Activated T-helper 1 cell treated with anti-CD3 and anti-CD28 coated beads, Interleukin-12 subunit alpha, Interleukin-12 subunit beta, Interleukin-2, Interleukin-4 antibody, amounts not matched to agents 30 ng/mL and 10 ng/mL and 1 ng/mL, durations not matched to agents 14 hours and 24 hours and 36 hours (primary cell): ENCODE measurements at regions of chr20 and their contacts with region 1.

Region 1: GRCh38 chr20:31849455-31849925 is 4.1 kb upstream of the FOXS1 start:
- DNase-seq: no peak
- H3K4me3 Mint-ChIP-seq: no peak overlapping the region
- H3K27ac Mint-ChIP-seq: no peak overlapping the region
- H3K4me1 Mint-ChIP-seq: no peaks in the 10 kb centered on the region
- H3K27me3 Mint-ChIP-seq: peaks cover 20% of the 10 kb centered on the region

Region 2: GRCh38 chr20:31496761-31497295 is 352.7 kb before region 1 on chr20:
- intact Hi-C with region 1: no loop called
- DNase-seq: no peak
- H3K4me3 Mint-ChIP-seq: no peak overlapping the region
- H3K27ac Mint-ChIP-seq: no peak overlapping the region
- H3K4me1 Mint-ChIP-seq: no peaks in the 10 kb centered on the region
- H3K27me3 Mint-ChIP-seq: peaks cover 9% of the 10 kb centered on the region

Region 3: DNA sequence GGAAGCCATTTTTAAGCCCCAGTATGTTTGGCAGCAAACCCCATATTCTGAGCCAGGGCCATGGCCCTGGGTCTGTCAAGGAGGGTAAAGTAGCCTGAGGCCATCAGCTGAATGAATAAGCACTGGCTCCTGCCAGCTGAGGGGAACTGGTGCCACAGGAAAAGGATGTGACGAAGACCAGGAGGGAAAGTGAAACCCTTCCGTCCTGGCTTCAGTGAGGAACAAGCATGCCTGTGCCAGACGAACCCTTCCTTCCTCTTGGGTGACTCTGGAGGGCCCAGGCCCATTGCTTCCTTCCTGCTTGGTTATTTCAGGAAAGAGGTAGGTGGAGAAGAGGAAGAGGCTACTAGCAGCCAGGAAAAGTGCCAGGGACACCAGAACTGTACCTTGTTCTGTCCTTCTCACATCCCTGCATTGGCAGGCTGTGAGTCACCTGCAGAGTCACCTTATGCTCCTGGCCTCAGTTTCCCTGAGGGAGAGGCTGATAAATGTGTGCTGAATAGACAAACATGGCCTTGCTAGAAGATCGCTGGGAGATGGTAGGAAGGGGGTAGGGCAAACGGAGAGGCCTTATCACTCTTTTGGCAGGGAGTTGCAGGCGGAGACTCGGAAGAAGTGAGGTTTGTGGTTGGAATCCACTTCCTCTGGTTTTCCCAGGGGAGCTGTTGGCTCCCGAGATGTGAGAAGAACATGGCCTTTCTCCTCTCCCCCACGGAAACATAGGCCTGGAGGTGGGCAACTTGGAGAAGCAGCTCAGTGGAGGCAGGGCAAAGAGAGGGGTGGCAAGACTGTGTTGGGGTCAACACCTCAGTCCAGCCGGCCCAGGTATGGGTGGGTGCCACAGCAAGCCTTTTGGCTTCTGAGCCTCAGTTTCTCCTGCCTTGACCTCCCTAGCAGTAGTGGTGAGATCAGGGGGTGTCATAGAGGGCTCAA is 174.3 kb before region 1 on chr20:
- intact Hi-C with region 1: no loop called
- DNase-seq: peak; percentile 71
- H3K4me3 Mint-ChIP-seq: peak overlapping the region; percentile 86
- H3K27ac Mint-ChIP-seq: peak overlapping the region; percentile 90
- H3K4me1 Mint-ChIP-seq: peaks cover 89% of the 10 kb centered on the region
- H3K27me3 Mint-ChIP-seq: no peaks in the 10 kb centered on the region

Region 4: GRCh38 chr20:31822421-31823330 is 26.8 kb before region 1 on chr20:
- intact Hi-C with region 1: loop called (anchors 1 kb)
- DNase-seq: peak; percentile 58
- H3K4me3 Mint-ChIP-seq: no peak overlapping the region
- H3K27ac Mint-ChIP-seq: no peak overlapping the region
- H3K4me1 Mint-ChIP-seq: no peaks in the 10 kb centered on the region
- H3K27me3 Mint-ChIP-seq: peaks cover 1% of the 10 kb centered on the region

Region 5: GRCh38 chr20:31879143-31879987 is 29.9 kb after region 1 on chr20:
- intact Hi-C with region 1: loop called (anchors 2 kb)
- DNase-seq: peak; percentile 78
- H3K4me3 Mint-ChIP-seq: peak overlapping the region; percentile 92
- H3K27ac Mint-ChIP-seq: peak overlapping the region; percentile 77
- H3K4me1 Mint-ChIP-seq: peaks cover 24% of the 10 kb centered on the region
- H3K27me3 Mint-ChIP-seq: peaks cover 27% of the 10 kb centered on the region

Region 6: GRCh38 chr20:31996996-31997395 is 147.5 kb after region 1 on chr20:
- intact Hi-C with region 1: no loop called
- DNase-seq: no peak
- H3K4me3 Mint-ChIP-seq: no peak overlapping the region
- H3K27ac Mint-ChIP-seq: no peak overlapping the region
- H3K4me1 Mint-ChIP-seq: no peaks in the 10 kb centered on the region
- H3K27me3 Mint-ChIP-seq: peaks cover 30% of the 10 kb centered on the region

Region 7: GRCh38 chr20:32031007-32031958 is 181.8 kb after region 1 on chr20:
- intact Hi-C with region 1: loop called (anchors 1 kb)
- DNase-seq: peak; percentile 22
- H3K4me3 Mint-ChIP-seq: no peak overlapping the region
- H3K27ac Mint-ChIP-seq: no peak overlapping the region
- H3K4me1 Mint-ChIP-seq: no peaks in the 10 kb centered on the region
- H3K27me3 Mint-ChIP-seq: peaks cover 48% of the 10 kb centered on the region

Region 8: DNA sequence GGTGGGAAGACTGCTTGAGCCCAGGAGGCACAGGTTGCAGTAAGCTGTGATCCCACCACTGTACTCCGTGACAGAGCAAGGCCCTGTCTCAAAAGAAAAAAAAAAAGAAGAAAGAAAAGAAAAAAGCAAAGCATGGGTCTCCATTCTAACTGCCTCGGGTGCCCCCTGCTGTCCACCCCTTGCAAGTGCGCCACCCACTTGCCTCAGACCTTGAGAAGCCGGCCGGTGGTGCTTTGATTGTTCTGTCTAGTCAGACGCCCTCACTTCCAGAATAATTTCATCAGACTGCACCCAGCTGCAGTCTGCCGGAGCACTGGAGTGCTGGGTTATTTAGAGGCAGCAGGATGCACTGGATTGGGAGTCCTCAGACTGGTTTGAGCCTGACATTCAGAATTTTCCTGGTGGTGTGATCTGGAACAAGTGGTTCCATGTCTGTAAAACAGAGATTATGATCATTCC is 242.4 kb after region 1 on chr20:
- intact Hi-C with region 1: loop called (anchors 1 kb)
- DNase-seq: peak; percentile 57
- H3K4me3 Mint-ChIP-seq: no peak overlapping the region
- H3K27ac Mint-ChIP-seq: no peak overlapping the region
- H3K4me1 Mint-ChIP-seq: no peaks in the 10 kb centered on the region
- H3K27me3 Mint-ChIP-seq: peaks cover 22% of the 10 kb centered on the region